Spleen (tissue), 13 donors: ENCODE measurements at regions of chr11 and their contacts with region 1.

Region 1: DNA sequence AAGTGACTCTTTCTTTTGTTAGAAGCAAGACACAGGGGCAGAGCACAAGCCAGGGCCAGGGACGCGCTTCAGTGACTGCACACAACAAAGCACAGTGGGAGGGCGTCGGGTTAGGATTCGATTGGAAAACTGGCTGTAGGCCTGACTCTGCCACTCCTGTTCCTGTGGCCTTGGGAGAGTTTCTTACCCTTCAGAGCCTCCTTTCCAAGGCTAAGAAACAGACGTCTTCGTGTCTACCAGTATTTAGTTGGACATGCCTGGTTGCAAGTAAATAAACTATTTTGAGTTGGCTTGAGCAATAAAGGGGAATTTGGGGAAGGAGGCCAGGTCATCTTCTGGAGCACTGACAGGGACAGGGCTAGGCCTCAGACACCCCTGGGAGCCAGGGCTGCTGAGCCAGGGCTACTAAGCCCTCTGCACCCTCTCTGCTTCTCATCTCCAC is 549.1 kb downstream of the INSC start:
- DNase-seq: no peak
- H3K4me3 ChIP-seq: no peak overlapping the region
- H3K27ac ChIP-seq: no peak overlapping the region
- H3K4me1 ChIP-seq: no peaks in the 10 kb centered on the region
- H3K27me3 ChIP-seq: no peaks in the 10 kb centered on the region
- CTCF ChIP-seq: no peak
- POLR2A ChIP-seq: no peak

Region 2: DNA sequence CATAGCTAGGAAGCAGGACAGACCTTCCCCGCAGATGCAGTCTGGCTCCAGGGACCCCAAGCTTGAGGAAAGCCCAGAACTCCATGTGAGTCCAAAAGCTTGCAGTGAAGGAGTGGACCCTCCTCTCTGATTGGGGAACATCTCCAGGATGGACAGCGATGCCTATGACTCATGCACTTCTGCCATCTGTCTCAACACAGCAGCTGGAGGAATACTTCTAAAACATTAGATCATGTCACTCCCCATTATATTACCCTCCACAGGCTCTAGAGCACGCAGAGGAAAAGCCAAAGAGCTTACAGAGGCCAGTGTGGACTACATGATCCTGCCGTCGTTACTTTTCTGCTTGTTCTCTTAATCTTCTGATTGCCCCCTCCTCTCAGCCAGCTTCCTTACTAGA is 56.7 kb after region 1 on chr11:
- intact Hi-C with region 1: loop called (anchors 10 kb)
- DNase-seq: no peak
- H3K4me3 ChIP-seq: no peak overlapping the region
- H3K27ac ChIP-seq: peak overlapping the region in 1 of 8 donors; percentile 21
- H3K4me1 ChIP-seq: no peaks in the 10 kb centered on the region
- H3K27me3 ChIP-seq: no peaks in the 10 kb centered on the region
- CTCF ChIP-seq: no peak
- POLR2A ChIP-seq: no peak